ENCODE measurements at regions of chr4 and their contacts with region 1.

Region 1: GRCh38 chr4:88021824-88022223 is 14.4 kb downstream of the PKD2 start:
- DNase-seq: no peak
- ATAC-seq: no peak
- H3K4me3 ChIP-seq: no peak overlapping the region
- H3K4me3 Mint-ChIP-seq: no peak overlapping the region
- H3K27ac ChIP-seq: no peak overlapping the region
- H3K27ac Mint-ChIP-seq: no peak overlapping the region
- H3K4me1 ChIP-seq: no peaks in the 10 kb centered on the region
- H3K4me1 Mint-ChIP-seq: no peaks in the 10 kb centered on the region
- H3K27me3 ChIP-seq: no peaks in the 10 kb centered on the region
- H3K27me3 Mint-ChIP-seq: no peaks in the 10 kb centered on the region
- CTCF ChIP-seq: no peak

Region 2: GRCh38 chr4:88033309-88033708 is 11.5 kb after region 1 on chr4:
- CTCF ChIA-PET with region 1: interaction called, 15 read pairs
- POLR2A ChIA-PET with region 1: no interaction called
- intact Hi-C with region 1: no loop called
- DNase-seq: peak; percentile 64
- ATAC-seq: peak; percentile 43
- H3K4me3 ChIP-seq: no peak overlapping the region
- H3K4me3 Mint-ChIP-seq: no peak overlapping the region
- H3K27ac ChIP-seq: no peak overlapping the region
- H3K27ac Mint-ChIP-seq: no peak overlapping the region
- H3K4me1 ChIP-seq: no peaks in the 10 kb centered on the region
- H3K4me1 Mint-ChIP-seq: no peaks in the 10 kb centered on the region
- H3K27me3 ChIP-seq: no peaks in the 10 kb centered on the region
- H3K27me3 Mint-ChIP-seq: no peaks in the 10 kb centered on the region
- CTCF ChIP-seq: peak; percentile 71

Region 3: DNA sequence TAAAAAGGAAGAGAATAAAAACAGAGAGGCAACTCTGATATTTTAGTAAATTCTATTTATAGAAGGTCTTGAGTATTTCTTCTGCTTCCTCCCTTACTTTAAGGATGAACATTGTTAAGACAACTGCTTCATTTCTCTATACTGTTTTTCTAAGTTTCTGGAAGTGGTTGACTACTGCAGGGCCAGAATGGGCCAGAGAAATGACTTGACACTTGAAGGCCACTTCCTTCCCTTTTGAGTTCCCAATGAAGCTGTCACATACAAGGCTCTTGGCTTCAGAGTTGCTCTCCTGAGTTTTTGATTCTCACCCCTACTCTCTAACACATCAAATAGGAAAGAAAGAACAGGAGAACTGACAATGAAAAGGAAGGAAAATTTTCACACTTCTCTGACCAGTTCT is 23.2 kb after region 1 on chr4:
- CTCF ChIA-PET with region 1: no interaction called
- POLR2A ChIA-PET with region 1: no interaction called
- intact Hi-C with region 1: no loop called
- DNase-seq: no peak
- ATAC-seq: no peak
- H3K4me3 ChIP-seq: no peak overlapping the region
- H3K4me3 Mint-ChIP-seq: no peak overlapping the region
- H3K27ac ChIP-seq: no peak overlapping the region
- H3K27ac Mint-ChIP-seq: no peak overlapping the region
- H3K4me1 ChIP-seq: no peaks in the 10 kb centered on the region
- H3K4me1 Mint-ChIP-seq: no peaks in the 10 kb centered on the region
- H3K27me3 ChIP-seq: no peaks in the 10 kb centered on the region
- H3K27me3 Mint-ChIP-seq: no peaks in the 10 kb centered on the region
- CTCF ChIP-seq: no peak